ENCODE measurements at regions of chr11 and their contacts with region 1.

Region 1: DNA sequence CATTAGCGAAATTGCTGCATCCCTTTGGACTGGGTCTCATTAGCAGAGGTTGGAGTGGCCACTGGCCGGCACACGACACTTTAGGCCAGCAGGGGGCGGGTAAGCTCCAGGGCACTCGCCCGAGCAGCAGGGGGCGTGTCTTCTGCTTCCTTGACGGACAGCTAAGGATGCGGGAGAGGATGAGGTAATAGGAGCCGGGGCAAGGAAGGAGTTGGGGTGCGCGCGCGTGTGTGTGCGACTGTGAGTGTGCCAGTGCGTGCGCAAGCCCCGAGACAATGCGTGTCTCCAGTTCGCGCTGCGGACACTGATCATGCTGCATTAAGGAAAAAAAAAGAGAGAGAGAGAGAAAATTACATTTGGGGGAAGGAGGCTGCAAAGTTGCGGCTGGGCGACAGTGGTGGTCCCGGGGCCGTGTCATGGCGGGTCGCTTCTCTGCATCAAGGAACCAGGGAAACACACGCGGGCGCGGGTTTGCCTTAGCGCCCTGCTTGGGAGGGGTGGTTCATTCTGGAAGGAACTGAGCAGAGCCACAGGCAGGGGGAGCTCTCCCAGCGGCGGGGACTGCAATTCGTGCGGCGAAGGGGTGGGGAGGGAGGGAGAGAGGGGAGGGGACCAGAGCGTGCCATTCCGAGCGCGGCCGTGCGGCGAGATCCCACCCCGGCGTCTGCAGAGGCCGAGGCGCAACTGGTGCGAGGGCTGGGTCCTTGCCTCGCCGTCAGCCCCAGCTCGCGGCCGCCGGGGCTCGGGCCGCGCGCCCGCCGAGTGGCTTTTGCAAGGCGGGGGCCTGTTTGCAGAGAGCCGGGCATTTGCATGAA is at the start of gene DTX4:
- DNase-seq: peak; percentile 73 to 93 (median 85)
- ATAC-seq: peak; percentile 86 to 94 (median 90)
- H3K4me3 ChIP-seq: peak within 1 kb of the TSS; percentile 71 to 75
- H3K4me3 Mint-ChIP-seq: peak within 1 kb of the TSS; percentile 79 to 90 (median 88)
- H3K27ac ChIP-seq: peak within 1 kb of the TSS; percentile 40
- H3K27ac Mint-ChIP-seq: peak within 1 kb of the TSS in 1 of 2 donors; percentile 58
- H3K4me1 ChIP-seq: peaks cover 2 to 19% of the 10 kb centered on the region in 2 experiments
- H3K4me1 Mint-ChIP-seq: peaks cover 7 to 14% (median 9%) of the 10 kb centered on the region in 3 donors
- H3K27me3 ChIP-seq: peaks cover 0 to 10% of the 10 kb centered on the region in 2 experiments
- H3K27me3 Mint-ChIP-seq: peaks cover 6 to 7% of the 10 kb centered on the region in 2 donors
- total RNA-seq, gene DTX4: 0.70 to 3.7 (median 2.1) TPM

Region 2: GRCh38 chr11:59152312-59152951 is 19.3 kb before region 1 on chr11:
- CTCF ChIA-PET with region 1: interaction called, 4 to 11 read pairs
- POLR2A ChIA-PET with region 1: no interaction called
- DNase-seq: no peak
- ATAC-seq: peak in 1 of 4 experiments; percentile 37
- H3K4me3 ChIP-seq: no peak overlapping the region
- H3K4me3 Mint-ChIP-seq: peak overlapping the region; percentile 15 to 57 (median 57)
- H3K27ac ChIP-seq: peak overlapping the region; percentile 28
- H3K27ac Mint-ChIP-seq: peak overlapping the region; percentile 24 to 62
- H3K4me1 ChIP-seq: no peaks in the 10 kb centered on the region
- H3K4me1 Mint-ChIP-seq: peaks cover 0 to 31% (median 18%) of the 10 kb centered on the region in 3 donors
- H3K27me3 ChIP-seq: no peaks in the 10 kb centered on the region
- H3K27me3 Mint-ChIP-seq: no peaks in the 10 kb centered on the region

Region 3: GRCh38 chr11:59186130-59186594 is 14.4 kb after region 1 on chr11:
- CTCF ChIA-PET with region 1: interaction called, 8 to 33 read pairs
- POLR2A ChIA-PET with region 1: interaction called, 3 to 4 read pairs
- DNase-seq: peak in 29 of 35 experiments; percentile 12 to 72 (median 38)
- ATAC-seq: peak; percentile 54 to 71 (median 61)
- H3K4me3 ChIP-seq: no peak overlapping the region
- H3K4me3 Mint-ChIP-seq: no peak overlapping the region
- H3K27ac ChIP-seq: no peak overlapping the region
- H3K27ac Mint-ChIP-seq: no peak overlapping the region
- H3K4me1 ChIP-seq: no peaks in the 10 kb centered on the region
- H3K4me1 Mint-ChIP-seq: peaks cover 0 to 2% (median 0%) of the 10 kb centered on the region in 3 donors
- H3K27me3 ChIP-seq: peaks cover 0 to 13% of the 10 kb centered on the region in 2 experiments
- H3K27me3 Mint-ChIP-seq: peaks cover 0 to 4% of the 10 kb centered on the region in 2 donors

Region 4: DNA sequence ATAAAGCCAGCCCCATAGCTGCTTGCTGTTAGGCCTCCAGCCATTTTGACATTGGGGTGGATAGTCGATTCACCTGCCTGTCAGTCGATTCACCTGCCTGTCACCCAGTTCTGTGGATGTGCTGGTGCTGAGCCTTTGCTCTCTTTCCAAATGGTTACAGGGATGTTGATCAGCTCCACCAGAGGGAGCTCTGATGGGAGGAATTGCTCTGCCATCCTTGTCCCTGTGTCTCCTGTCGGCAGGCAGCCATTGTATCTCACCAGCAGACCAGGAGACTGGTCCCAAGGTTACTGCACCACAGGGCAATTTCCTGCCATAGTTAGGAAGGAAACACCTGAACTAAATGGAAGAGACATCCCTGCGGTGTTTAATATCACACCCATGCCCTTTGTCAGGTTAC is 34.9 kb after region 1 on chr11:
- CTCF ChIA-PET with region 1: interaction called in 1 of 2 experiments, 12 read pairs
- POLR2A ChIA-PET with region 1: no interaction called
- DNase-seq: peak in 1 of 35 experiments; percentile 28
- ATAC-seq: peak in 1 of 4 experiments; percentile 16
- H3K4me3 ChIP-seq: no peak overlapping the region
- H3K4me3 Mint-ChIP-seq: peak overlapping the region in 1 of 3 donors; percentile 28
- H3K27ac ChIP-seq: no peak overlapping the region
- H3K27ac Mint-ChIP-seq: no peak overlapping the region
- H3K4me1 ChIP-seq: peaks cover 13 to 24% of the 10 kb centered on the region in 2 experiments
- H3K4me1 Mint-ChIP-seq: peaks cover 20 to 24% (median 23%) of the 10 kb centered on the region in 3 donors
- H3K27me3 ChIP-seq: peaks cover 0 to 9% of the 10 kb centered on the region in 2 experiments
- H3K27me3 Mint-ChIP-seq: no peaks in the 10 kb centered on the region

Measured in T-cell (primary cell).